Left cardiac atrium (tissue), 4 donors: ENCODE measurements at regions of chr3 and their contacts with region 1.

Region 1: DNA sequence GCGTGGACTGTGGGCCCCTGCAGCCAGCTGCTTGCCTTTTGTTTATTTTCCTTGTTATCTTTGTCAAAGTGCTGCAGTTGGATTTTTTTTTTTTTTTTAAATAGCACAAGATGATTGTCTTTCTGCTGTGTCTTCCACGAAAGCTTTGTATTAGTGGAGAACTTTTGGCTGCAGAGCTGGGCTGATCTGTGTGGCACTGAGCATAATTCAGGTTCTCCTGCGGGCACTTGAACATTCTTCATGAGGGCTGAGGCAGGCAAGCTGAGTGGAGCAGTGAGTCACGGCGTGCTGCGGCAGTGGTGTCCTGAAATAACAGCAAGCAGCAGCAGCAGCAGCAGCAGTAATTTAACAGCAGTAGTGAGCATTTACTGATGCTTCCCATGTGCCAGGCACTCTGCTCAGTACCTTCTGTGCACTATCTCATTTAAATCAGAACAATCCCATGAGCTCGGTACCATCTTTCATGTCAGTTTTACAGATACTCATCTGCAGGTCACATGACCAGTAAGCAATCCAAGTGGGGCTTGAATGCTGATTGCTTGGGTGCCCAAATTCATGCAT is 45.8 kb downstream of the MITF start:
- DNase-seq: peak; percentile 63
- ATAC-seq: peak; percentile 82

Region 2: DNA sequence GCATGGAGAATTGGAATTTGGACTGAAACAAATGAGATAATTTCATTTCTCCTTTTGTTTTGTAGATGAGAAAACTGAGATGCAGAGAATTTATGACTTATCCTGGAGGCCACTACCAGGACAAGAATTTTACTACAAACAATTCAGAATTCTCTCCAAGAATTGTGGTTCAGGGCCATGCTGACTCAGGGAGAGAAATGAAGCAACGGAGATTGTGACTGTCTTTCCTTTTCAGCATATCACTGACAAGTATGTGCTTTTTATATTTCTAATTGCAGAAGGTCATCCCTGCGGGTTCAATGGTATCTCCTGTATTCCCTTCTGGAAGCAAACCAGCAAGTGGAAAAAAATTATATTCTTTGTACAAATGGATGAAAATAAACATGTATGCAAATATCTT is 216.6 kb before region 1 on chr3:
- intact Hi-C with region 1: no loop called
- DNase-seq: no peak
- ATAC-seq: peak; percentile 64 to 68

Region 3: DNA sequence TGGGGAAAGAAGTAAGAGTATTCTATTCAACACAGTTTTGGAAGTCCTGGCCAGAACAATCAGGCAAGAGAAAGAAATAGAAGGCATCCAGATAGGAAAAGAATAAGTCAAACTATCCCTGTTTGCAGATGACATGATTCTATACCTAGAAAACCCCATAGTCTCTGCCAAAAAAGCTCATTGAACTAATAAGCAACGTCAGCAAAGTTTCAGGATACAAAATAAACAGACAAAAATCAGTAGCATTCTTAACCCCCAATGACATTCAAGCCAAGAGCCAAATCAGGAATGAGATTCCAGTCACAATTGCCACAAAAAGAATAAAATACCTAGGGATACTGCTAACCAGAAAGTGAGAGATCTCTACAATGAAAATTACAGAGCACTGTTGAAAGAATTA is 145.2 kb before region 1 on chr3:
- intact Hi-C with region 1: no loop called
- DNase-seq: no peak
- ATAC-seq: no peak

Region 4: GRCh38 chr3:69729147-69729919 is 55.7 kb before region 1 on chr3:
- intact Hi-C with region 1: no loop called
- DNase-seq: no peak
- ATAC-seq: no peak

Region 5: GRCh38 chr3:69739204-69740102 is 45.6 kb before region 1 on chr3 and contains the start of gene MITF:
- intact Hi-C with region 1: loop called in 1 of 2 experiments (anchors 5 kb)
- DNase-seq: peak; percentile 95
- ATAC-seq: peak; percentile 97 to 99
- total RNA-seq, gene MITF: 35.2 to 51.4 TPM

Region 6: DNA sequence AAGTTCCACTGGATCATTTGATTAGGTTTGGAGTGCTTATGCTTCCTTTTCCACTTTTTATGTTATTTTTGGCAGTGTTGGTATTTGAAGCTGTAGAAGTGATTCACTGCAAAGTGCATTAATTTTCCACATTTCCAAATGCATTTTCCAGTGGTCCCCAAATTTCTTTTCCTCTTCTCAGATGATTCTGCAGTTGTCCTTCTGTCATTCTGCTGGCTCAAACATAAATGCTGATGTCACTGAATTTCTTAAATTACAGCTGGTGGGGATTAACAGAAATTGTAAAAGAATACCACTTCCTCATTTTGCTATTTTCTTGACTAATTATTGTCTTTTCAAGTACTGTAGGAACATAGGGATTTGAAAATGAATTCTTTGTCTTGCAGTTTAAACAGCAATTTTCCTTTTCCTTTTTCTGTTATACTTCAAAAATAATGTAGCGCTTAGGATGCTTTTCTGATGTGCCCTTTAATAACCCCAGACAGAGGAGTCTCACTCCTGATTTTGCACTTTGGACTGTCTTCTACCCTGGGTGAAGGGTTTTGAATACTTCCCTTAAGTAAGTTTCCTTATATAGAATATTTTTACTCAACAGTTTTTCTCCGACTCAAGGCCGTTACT is 20.8 kb before region 1 on chr3:
- intact Hi-C with region 1: loop called in 1 of 2 experiments (anchors 2 kb)
- DNase-seq: no peak
- ATAC-seq: peak in 1 of 2 donors; percentile 18